HCT116 (cell line): ENCODE measurements at regions of chr3 and their contacts with region 1.

Region 1: DNA sequence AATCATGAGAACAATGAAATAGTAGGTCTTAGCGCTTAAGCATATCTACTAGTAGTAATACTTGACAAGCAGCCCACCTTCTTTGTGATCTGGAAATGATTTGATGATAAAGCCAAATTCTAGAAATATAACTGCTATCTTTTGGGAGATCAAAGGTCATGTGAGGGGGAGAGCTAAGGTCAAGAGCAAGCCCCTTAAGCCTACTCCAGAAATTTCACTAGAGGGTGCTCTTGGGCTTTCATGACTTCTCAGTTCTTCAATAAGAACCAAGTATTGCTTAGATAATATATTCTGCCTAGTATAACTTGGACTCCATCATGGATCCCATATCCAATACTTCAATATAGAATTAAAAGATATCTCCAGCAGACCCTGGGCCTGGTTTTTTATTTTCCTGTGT is 319.6 kb downstream of the ZBTB20 start:
- DNase-seq: peak; percentile 60
- ATAC-seq: peak; percentile 91
- H3K4me3 ChIP-seq: no peak overlapping the region
- H3K27ac ChIP-seq: no peak overlapping the region
- H3K4me1 ChIP-seq: peaks cover 11 to 13% of the 10 kb centered on the region in 2 experiments; a peak in 2 of 4 replicates
- H3K27me3 ChIP-seq: no peaks in the 10 kb centered on the region
- CTCF ChIP-seq: peak; percentile 46 to 76 (median 66); a peak in 5 of 6 replicates
- POLR2A ChIP-seq: no peak
- RAD21 ChIP-seq: peak; percentile 78

Region 2: GRCh38 chr3:114498779-114499370 is 328.6 kb before region 1 on chr3:
- CTCF ChIA-PET with region 1: no interaction called
- POLR2A ChIA-PET with region 1: no interaction called
- RAD21 ChIA-PET with region 1: no interaction called
- intact Hi-C with region 1: no loop called
- DNase-seq: peak; percentile 94
- ATAC-seq: peak; percentile 91
- H3K4me3 ChIP-seq: peak overlapping the region in 1 of 2 experiments; percentile 38; a peak in 2 of 4 replicates
- H3K27ac ChIP-seq: peak overlapping the region; percentile 77
- H3K4me1 ChIP-seq: peaks cover 84 to 90% of the 10 kb centered on the region in 2 experiments
- H3K27me3 ChIP-seq: no peaks in the 10 kb centered on the region
- CTCF ChIP-seq: no peak
- POLR2A ChIP-seq: no peak
- RAD21 ChIP-seq: no peak

Region 3: GRCh38 chr3:115081444-115081843 is 253.9 kb after region 1 on chr3:
- CTCF ChIA-PET with region 1: no interaction called
- POLR2A ChIA-PET with region 1: no interaction called
- RAD21 ChIA-PET with region 1: no interaction called
- intact Hi-C with region 1: loop called (anchors 1 kb)
- DNase-seq: no peak
- ATAC-seq: no peak
- H3K4me3 ChIP-seq: no peak overlapping the region
- H3K27ac ChIP-seq: no peak overlapping the region
- H3K4me1 ChIP-seq: 0 out of 4 replicates have a peak, but pooled peaks cover 0 to 4% of the 10 kb centered on the region in 2 experiments
- H3K27me3 ChIP-seq: no peaks in the 10 kb centered on the region
- CTCF ChIP-seq: 0 out of 6 replicates have a peak, but pooled peaks of 1 of the 3 experiments have one; percentile 16
- POLR2A ChIP-seq: no peak
- RAD21 ChIP-seq: peak; percentile 44

Region 4: GRCh38 chr3:115169808-115170207 is 342.3 kb after region 1 on chr3:
- CTCF ChIA-PET with region 1: interaction called, 3 read pairs
- POLR2A ChIA-PET with region 1: no interaction called
- RAD21 ChIA-PET with region 1: no interaction called
- intact Hi-C with region 1: loop called (anchors 5 kb)
- DNase-seq: no peak
- ATAC-seq: no peak
- H3K4me3 ChIP-seq: no peak overlapping the region
- H3K27ac ChIP-seq: no peak overlapping the region
- H3K4me1 ChIP-seq: no peaks in the 10 kb centered on the region
- H3K27me3 ChIP-seq: no peaks in the 10 kb centered on the region
- CTCF ChIP-seq: peak in 2 of 3 experiments; percentile 27 to 48; a peak in 2 of 6 replicates
- POLR2A ChIP-seq: no peak
- RAD21 ChIP-seq: peak; percentile 54

Region 5: DNA sequence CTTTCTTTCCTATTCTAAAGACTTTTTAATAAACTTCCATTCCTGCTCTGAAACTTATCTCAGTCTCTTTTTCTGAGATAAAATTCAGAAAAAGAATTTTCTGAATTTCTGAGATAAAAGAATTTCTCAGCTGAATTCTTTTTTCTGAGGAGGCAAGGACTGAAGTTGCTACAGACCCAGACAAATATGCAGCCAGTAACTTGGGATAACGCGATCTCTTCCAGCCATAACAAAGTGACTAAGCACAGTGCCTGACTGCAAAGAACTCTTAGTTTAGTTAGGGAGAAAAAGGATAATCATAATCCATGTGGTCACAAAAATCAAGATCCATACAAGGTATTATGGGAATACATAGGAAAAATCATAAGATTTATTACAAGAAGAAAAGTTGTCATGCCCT is 573.8 kb after region 1 on chr3:
- CTCF ChIA-PET with region 1: no interaction called
- POLR2A ChIA-PET with region 1: no interaction called
- RAD21 ChIA-PET with region 1: no interaction called
- intact Hi-C with region 1: no loop called
- DNase-seq: no peak
- ATAC-seq: no peak
- H3K4me3 ChIP-seq: no peak overlapping the region
- H3K27ac ChIP-seq: no peak overlapping the region
- H3K4me1 ChIP-seq: no peaks in the 10 kb centered on the region
- H3K27me3 ChIP-seq: no peaks in the 10 kb centered on the region
- CTCF ChIP-seq: no peak
- POLR2A ChIP-seq: no peak
- RAD21 ChIP-seq: no peak

Region 6: DNA sequence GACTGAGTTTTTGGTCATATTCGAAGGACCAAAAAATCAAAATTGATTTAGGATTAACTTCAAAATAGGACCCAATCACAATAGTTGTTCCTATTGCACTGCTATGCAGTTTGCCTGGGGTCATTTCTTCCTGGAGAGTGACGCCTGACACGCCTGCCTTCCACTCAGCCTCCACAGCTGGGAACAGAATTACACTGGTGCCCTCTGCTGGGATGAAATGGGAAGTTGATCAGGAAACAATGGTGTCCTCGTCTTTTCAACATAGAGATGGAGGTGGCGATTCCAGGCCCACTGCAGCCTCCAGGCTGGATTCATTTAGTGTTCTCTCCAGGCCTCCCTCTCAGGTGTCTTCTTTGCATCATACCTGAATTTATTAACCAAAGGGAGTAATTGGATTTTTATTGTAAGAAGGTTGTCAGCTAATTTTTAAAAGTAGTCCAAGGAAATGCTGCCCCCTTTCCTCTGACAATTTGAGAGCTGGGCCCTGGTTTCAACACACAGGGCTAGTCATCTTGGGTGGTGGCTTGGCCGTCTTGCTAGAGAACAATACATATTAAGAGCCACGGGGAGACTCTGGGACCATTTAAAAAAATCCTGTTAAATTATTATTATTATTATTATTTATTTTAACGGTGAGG is 865.5 kb after region 1 on chr3:
- CTCF ChIA-PET with region 1: interaction called, 3 read pairs
- POLR2A ChIA-PET with region 1: no interaction called
- RAD21 ChIA-PET with region 1: no interaction called
- intact Hi-C with region 1: loop called (anchors 2 kb)
- DNase-seq: peak; percentile 68
- ATAC-seq: peak; percentile 96
- H3K4me3 ChIP-seq: no peak overlapping the region
- H3K27ac ChIP-seq: no peak overlapping the region
- H3K4me1 ChIP-seq: peaks cover 0 to 11% of the 10 kb centered on the region in 2 experiments; a peak in 2 of 4 replicates
- H3K27me3 ChIP-seq: no peaks in the 10 kb centered on the region
- CTCF ChIP-seq: peak; percentile 74 to 95 (median 86)
- POLR2A ChIP-seq: no peak
- RAD21 ChIP-seq: peak; percentile 96